ENCODE measurements at regions of chrX and their contacts with region 1.

Region 1: GRCh38 chrX:48957827-48958634 is 624 bp upstream of the OTUD5 start:
- DNase-seq: peak; percentile 87
- ATAC-seq: peak; percentile 93
- H3K4me3 ChIP-seq: peak overlapping the region; percentile 79; the same call in 1 of the 2 replicates
- H3K27ac ChIP-seq: peak overlapping the region; percentile 92
- H3K4me1 ChIP-seq: peaks cover 7% of the 10 kb centered on the region
- H3K27me3 ChIP-seq: no peaks in the 10 kb centered on the region
- CTCF ChIP-seq: no peak
- EP300 ChIP-seq: no peak
- POLR2A ChIP-seq: peak; percentile 77
- RAD21 ChIP-seq: no peak

Region 2: DNA sequence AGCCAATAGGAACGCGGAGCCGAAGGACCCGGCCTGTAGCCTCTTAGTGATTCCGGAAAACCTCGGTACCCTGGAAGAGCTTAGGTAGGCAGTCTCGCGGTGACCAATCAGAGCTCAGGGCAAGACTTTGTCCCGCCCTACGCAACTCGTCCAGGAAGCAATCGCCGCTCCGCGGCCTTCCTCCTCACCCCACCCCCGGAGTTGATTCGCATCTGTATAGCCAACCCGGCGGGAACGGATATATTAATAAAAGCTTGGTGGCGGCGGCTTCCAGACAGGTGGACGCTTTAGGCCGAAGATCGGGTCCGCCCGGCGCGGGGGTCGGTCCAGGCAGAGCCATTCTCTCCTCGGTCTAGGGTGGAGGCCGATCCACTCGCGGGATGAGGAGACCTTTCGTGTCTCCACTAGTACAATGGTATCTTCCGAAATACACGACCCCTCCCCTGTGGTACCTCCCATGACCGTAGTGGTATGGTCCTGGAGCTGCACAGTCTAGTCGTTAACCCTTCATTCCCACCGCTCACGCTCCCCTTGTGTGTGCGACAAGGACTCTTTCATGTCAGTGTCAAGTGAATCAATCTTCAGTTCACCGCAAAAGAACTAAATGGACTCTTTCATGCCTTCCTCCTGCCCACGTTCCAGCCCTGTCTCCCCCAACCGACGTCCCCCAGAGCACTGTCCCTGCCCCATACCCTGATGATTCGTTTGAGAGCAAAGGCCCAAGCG is 220.7 kb before region 1 on chrX:
- CTCF ChIA-PET with region 1: no interaction called
- POLR2A ChIA-PET with region 1: interaction called, 11 read pairs
- RAD21 ChIA-PET with region 1: no interaction called
- SMC1A ChIA-PET with region 1: interaction called, 3 read pairs
- in situ Hi-C with region 1: no loop called
- intact Hi-C with region 1: no loop called
- DNase-seq: peak; percentile 86
- ATAC-seq: peak; percentile 99
- H3K4me3 ChIP-seq: peak overlapping the region; percentile 64
- H3K27ac ChIP-seq: peak overlapping the region; percentile 74
- H3K4me1 ChIP-seq: no peaks in the 10 kb centered on the region; the same call in 1 of the 2 replicates
- H3K27me3 ChIP-seq: no peaks in the 10 kb centered on the region
- CTCF ChIP-seq: no peak
- EP300 ChIP-seq: no peak
- POLR2A ChIP-seq: peak; percentile 70
- RAD21 ChIP-seq: no peak

Region 3: DNA sequence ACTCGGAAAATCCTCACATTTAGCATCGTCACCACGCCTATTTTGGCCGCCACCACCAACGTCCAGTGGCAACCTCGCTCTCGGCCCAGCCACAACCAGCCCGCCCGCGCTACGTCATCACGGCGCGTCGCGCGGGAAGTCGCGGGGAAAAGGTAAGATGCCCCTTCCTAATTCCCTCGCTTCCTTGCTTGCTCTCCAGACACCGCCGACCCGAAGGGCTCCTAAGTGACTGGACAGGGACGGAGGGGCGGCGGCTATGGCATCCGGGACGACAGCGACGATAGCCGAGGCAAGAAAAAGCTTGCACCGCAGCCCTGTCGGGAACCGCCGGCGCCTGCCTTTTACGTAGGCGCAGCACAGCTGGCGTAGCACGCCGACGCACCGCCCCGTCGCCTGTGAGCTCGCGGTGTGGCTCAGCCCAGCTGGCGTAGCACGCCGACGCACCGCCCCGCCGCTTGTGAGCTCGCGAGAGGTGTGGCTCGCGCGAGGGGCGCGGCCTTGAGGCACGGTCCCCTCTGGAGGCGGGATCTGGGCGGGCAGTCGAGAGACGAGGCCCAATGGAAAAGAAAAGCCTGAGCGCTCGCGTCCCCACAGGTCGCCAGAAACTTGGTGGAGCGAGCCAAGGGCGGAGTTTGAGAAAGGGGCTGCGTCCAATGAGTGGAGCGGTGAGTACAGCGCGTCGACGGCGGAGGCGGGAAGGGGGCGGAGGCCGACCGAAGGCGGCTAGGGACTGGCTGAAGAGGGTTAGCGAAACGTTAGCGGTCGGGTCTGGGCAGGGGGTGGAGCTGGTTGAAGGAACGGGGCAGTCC is 156.5 kb before region 1 on chrX and contains the start of gene HDAC6:
- CTCF ChIA-PET with region 1: no interaction called
- POLR2A ChIA-PET with region 1: interaction called, 10 read pairs
- RAD21 ChIA-PET with region 1: interaction called, 3 read pairs
- SMC1A ChIA-PET with region 1: no interaction called
- in situ Hi-C with region 1: no loop called
- intact Hi-C with region 1: loop called (anchors 5 kb)
- DNase-seq: peak; percentile 94
- ATAC-seq: peak; percentile 90
- H3K4me3 ChIP-seq: peak within 1 kb of the TSS; percentile 69
- H3K27ac ChIP-seq: peak within 1 kb of the TSS; percentile 94
- H3K4me1 ChIP-seq: no peaks in the 10 kb centered on the region
- H3K27me3 ChIP-seq: no peaks in the 10 kb centered on the region
- CTCF ChIP-seq: no peak
- EP300 ChIP-seq: no peak
- POLR2A ChIP-seq: peak; percentile 75
- RAD21 ChIP-seq: no peak
- polyA plus RNA-seq, gene HDAC6: 8.3 to 17.5 TPM

Region 4: DNA sequence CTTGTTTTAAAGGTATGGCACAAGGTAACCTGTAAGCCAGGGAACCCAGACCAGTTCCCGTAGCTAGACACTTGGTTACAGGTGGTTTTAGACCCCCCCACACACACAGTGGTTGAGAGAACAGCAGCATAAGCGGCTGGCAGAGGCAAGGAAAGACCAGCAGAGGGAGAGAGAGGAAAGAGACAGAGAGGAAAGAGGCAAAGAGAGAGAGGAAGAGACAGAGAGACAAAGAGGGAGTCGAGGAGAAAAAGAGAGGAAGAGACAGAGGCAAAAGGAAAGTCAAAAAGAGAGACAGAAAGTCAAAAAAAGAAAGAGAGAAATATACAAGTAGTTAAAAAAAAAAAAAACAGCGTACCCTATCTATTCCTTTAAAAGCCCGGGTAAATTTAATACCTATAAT is 103.1 kb before region 1 on chrX:
- CTCF ChIA-PET with region 1: no interaction called
- POLR2A ChIA-PET with region 1: no interaction called
- RAD21 ChIA-PET with region 1: no interaction called
- SMC1A ChIA-PET with region 1: no interaction called
- in situ Hi-C with region 1: no loop called
- intact Hi-C with region 1: no loop called
- DNase-seq: no peak
- ATAC-seq: no peak
- H3K4me3 ChIP-seq: no peak overlapping the region
- H3K27ac ChIP-seq: no peak overlapping the region
- H3K4me1 ChIP-seq: no peaks in the 10 kb centered on the region
- H3K27me3 ChIP-seq: no peaks in the 10 kb centered on the region
- CTCF ChIP-seq: 0 out of 6 replicates have a peak, but pooled peaks of 2 of the 3 experiments have one; percentile 4
- EP300 ChIP-seq: no peak
- POLR2A ChIP-seq: no peak
- RAD21 ChIP-seq: no peak

Region 5: GRCh38 chrX:48904626-48905025 is 53.4 kb before region 1 on chrX:
- CTCF ChIA-PET with region 1: no interaction called
- POLR2A ChIA-PET with region 1: no interaction called
- RAD21 ChIA-PET with region 1: no interaction called
- SMC1A ChIA-PET with region 1: no interaction called
- in situ Hi-C with region 1: no loop called
- intact Hi-C with region 1: no loop called
- DNase-seq: no peak
- ATAC-seq: no peak
- H3K4me3 ChIP-seq: no peak overlapping the region
- H3K27ac ChIP-seq: no peak overlapping the region
- H3K4me1 ChIP-seq: no peaks in the 10 kb centered on the region
- H3K27me3 ChIP-seq: no peaks in the 10 kb centered on the region
- CTCF ChIP-seq: no peak
- EP300 ChIP-seq: no peak
- POLR2A ChIP-seq: no peak
- RAD21 ChIP-seq: no peak

Region 6: GRCh38 chrX:48917139-48918001 is 40.7 kb before region 1 on chrX:
- CTCF ChIA-PET with region 1: no interaction called
- POLR2A ChIA-PET with region 1: no interaction called
- RAD21 ChIA-PET with region 1: no interaction called
- SMC1A ChIA-PET with region 1: interaction called, 4 read pairs
- in situ Hi-C with region 1: no loop called
- intact Hi-C with region 1: loop called (anchors 5 kb)
- DNase-seq: peak; percentile 88
- ATAC-seq: peak; percentile 62
- H3K4me3 ChIP-seq: peak overlapping the region; percentile 65
- H3K27ac ChIP-seq: peak overlapping the region; percentile 83
- H3K4me1 ChIP-seq: peaks cover 9% of the 10 kb centered on the region
- H3K27me3 ChIP-seq: no peaks in the 10 kb centered on the region
- CTCF ChIP-seq: peak; percentile 86 to 97 (median 91)
- EP300 ChIP-seq: peak in 1 of 2 experiments; percentile 67; a peak in 2 of 4 replicates
- POLR2A ChIP-seq: peak; percentile 67
- RAD21 ChIP-seq: peak; percentile 55

Region 7: DNA sequence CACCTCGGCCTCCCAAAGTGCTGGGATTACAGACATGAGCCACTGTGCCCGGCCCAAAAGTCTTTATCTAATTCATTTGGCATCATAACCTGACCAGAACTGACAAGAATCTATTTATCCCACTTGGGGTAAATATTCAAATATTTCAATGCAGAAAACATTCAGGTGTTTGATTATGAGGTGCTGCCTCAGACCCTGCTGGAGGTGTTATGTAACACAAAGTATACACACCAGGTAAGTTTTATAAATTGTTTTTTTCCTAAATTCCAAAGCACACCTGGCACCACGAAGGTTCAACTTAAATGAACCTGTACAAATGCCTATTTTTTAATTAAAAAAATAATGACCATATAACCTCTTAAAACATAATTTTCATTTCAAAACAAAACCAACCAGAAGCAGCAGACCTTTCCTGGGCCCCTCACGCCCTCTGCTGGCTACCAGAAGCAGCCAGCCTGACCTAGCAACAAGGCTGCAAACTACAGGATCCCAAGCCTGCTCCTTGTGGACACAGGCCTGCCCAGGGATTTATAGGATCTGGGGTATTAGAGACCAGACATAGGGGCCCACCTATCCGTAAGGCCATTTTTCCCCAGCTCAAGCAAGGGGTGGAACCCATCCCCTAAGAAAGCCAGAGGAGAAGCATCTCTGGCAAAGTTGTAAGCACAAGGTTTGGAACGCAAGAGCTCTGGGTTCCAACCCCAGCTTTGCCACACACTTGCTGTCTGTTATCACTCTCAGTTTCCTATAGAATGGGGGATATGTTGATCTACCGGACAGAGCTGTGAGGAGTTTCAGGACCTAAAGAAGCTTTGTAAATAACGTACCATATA is 12.3 kb before region 1 on chrX:
- CTCF ChIA-PET with region 1: interaction called, 17 read pairs
- POLR2A ChIA-PET with region 1: interaction called, 3 read pairs
- RAD21 ChIA-PET with region 1: interaction called, 7 read pairs
- SMC1A ChIA-PET with region 1: interaction called, 8 read pairs
- in situ Hi-C with region 1: no loop called
- intact Hi-C with region 1: no loop called
- DNase-seq: no peak
- ATAC-seq: peak; percentile 82
- H3K4me3 ChIP-seq: no peak overlapping the region
- H3K27ac ChIP-seq: no peak overlapping the region
- H3K4me1 ChIP-seq: peaks cover 13% of the 10 kb centered on the region
- H3K27me3 ChIP-seq: no peaks in the 10 kb centered on the region
- CTCF ChIP-seq: peak; percentile 88 to 93 (median 91)
- EP300 ChIP-seq: no peak
- POLR2A ChIP-seq: no peak
- RAD21 ChIP-seq: peak; percentile 94

Region 8: GRCh38 chrX:49002091-49002935 is 44.3 kb after region 1 on chrX and contains the start of gene GRIPAP1:
- CTCF ChIA-PET with region 1: interaction called, 3 read pairs
- POLR2A ChIA-PET with region 1: interaction called, 8 read pairs
- RAD21 ChIA-PET with region 1: interaction called, 6 read pairs
- SMC1A ChIA-PET with region 1: interaction called, 3 read pairs
- in situ Hi-C with region 1: no loop called
- intact Hi-C with region 1: loop called (anchors 2 kb)
- DNase-seq: peak; percentile 60
- ATAC-seq: peak; percentile 82
- H3K4me3 ChIP-seq: peak within 1 kb of the TSS; percentile 62
- H3K27ac ChIP-seq: peak within 1 kb of the TSS; percentile 87
- H3K4me1 ChIP-seq: no peaks in the 10 kb centered on the region; the same call in none of the 2 replicates
- H3K27me3 ChIP-seq: no peaks in the 10 kb centered on the region
- CTCF ChIP-seq: no peak
- EP300 ChIP-seq: no peak
- POLR2A ChIP-seq: peak; percentile 94
- RAD21 ChIP-seq: no peak
- polyA plus RNA-seq, gene GRIPAP1: 4.2 to 4.9 TPM